GM12878 (cell line): ENCODE measurements at regions of chr1 and their contacts with region 1.

Region 1: DNA sequence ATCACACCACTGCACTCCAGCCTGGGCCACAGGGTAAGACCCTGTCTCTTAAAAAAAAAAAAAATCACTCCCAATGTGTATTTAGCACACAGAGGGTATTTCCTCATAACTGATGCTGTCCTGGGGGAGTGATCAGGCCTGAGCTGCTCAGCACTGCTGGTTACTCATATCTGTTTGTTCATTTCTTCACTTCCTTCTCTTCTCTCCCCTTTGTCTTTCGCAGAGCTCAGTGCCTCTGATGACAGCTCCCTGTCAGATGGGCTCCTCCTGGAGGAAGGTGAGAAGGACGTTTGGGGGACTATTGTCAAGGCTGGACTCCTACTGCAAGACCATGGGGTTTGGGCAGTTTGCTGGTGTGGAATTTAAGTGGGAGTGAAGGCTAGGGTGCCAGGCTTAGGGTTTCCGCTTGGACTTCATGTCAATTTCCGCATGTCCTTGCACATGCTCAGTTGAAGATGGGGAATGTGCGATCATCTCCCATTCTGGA is 13.0 kb downstream of the INAVA start:
- DNase-seq: peak; percentile 67
- ATAC-seq: peak; percentile 74
- H3K4me3 ChIP-seq: no peak overlapping the region
- H3K27ac ChIP-seq: no peak overlapping the region
- H3K4me1 ChIP-seq: peaks cover 15% of the 10 kb centered on the region
- H3K27me3 ChIP-seq: no peaks in the 10 kb centered on the region
- CTCF ChIP-seq: peak in 1 of 3 experiments; percentile 26; a peak in 1 of 6 replicates
- EP300 ChIP-seq: peak; percentile 44 to 60; a peak in 2 of 4 replicates
- POLR2A ChIP-seq: no peak
- RAD21 ChIP-seq: peak; percentile 46

Region 2: GRCh38 chr1:200588698-200589097 is 319.0 kb before region 1 on chr1:
- CTCF ChIA-PET with region 1: no interaction called
- POLR2A ChIA-PET with region 1: interaction called, 12 read pairs
- RAD21 ChIA-PET with region 1: no interaction called
- SMC1A ChIA-PET with region 1: no interaction called
- in situ Hi-C with region 1: no loop called
- intact Hi-C with region 1: no loop called
- DNase-seq: no peak
- ATAC-seq: peak; percentile 52
- H3K4me3 ChIP-seq: no peak overlapping the region
- H3K27ac ChIP-seq: no peak overlapping the region
- H3K4me1 ChIP-seq: no peaks in the 10 kb centered on the region
- H3K27me3 ChIP-seq: no peaks in the 10 kb centered on the region
- CTCF ChIP-seq: no peak
- EP300 ChIP-seq: no peak
- POLR2A ChIP-seq: no peak
- RAD21 ChIP-seq: no peak

Region 3: GRCh38 chr1:200866521-200866920 is 41.1 kb before region 1 on chr1:
- CTCF ChIA-PET with region 1: interaction called, 6 read pairs
- POLR2A ChIA-PET with region 1: interaction called, 14 read pairs
- RAD21 ChIA-PET with region 1: interaction called, 19 read pairs
- SMC1A ChIA-PET with region 1: interaction called, 41 read pairs
- in situ Hi-C with region 1: no loop called
- intact Hi-C with region 1: loop called (anchors 5 kb)
- DNase-seq: peak; percentile 98
- ATAC-seq: peak; percentile 74
- H3K4me3 ChIP-seq: no peak overlapping the region
- H3K27ac ChIP-seq: peak overlapping the region; percentile 71
- H3K4me1 ChIP-seq: peaks cover 71% of the 10 kb centered on the region
- H3K27me3 ChIP-seq: no peaks in the 10 kb centered on the region
- CTCF ChIP-seq: no peak
- EP300 ChIP-seq: peak; percentile 96 to 97
- POLR2A ChIP-seq: no peak
- RAD21 ChIP-seq: peak; percentile 22; the same call in 1 of the 2 replicates

Region 4: GRCh38 chr1:200877839-200878551 is 29.7 kb before region 1 on chr1:
- CTCF ChIA-PET with region 1: interaction called, 14 read pairs
- POLR2A ChIA-PET with region 1: interaction called, 6 read pairs
- RAD21 ChIA-PET with region 1: interaction called, 18 read pairs
- SMC1A ChIA-PET with region 1: interaction called, 7 read pairs
- in situ Hi-C with region 1: no loop called
- intact Hi-C with region 1: no loop called
- DNase-seq: peak; percentile 89
- ATAC-seq: peak; percentile 84
- H3K4me3 ChIP-seq: no peak overlapping the region
- H3K27ac ChIP-seq: no peak overlapping the region
- H3K4me1 ChIP-seq: peaks cover 17% of the 10 kb centered on the region
- H3K27me3 ChIP-seq: no peaks in the 10 kb centered on the region
- CTCF ChIP-seq: no peak
- EP300 ChIP-seq: peak in 1 of 2 experiments; percentile 58; a peak in 1 of 4 replicates
- POLR2A ChIP-seq: no peak
- RAD21 ChIP-seq: no peak

Region 5: GRCh38 chr1:200890818-200891773 is 16.6 kb before region 1 on chr1:
- CTCF ChIA-PET with region 1: interaction called, 131 read pairs
- POLR2A ChIA-PET with region 1: interaction called, 60 read pairs
- RAD21 ChIA-PET with region 1: interaction called, 53 read pairs
- SMC1A ChIA-PET with region 1: interaction called, 193 read pairs
- in situ Hi-C with region 1: no loop called
- intact Hi-C with region 1: loop called (anchors 2 kb)
- DNase-seq: no peak
- ATAC-seq: peak; percentile 5
- H3K4me3 ChIP-seq: peak overlapping the region; percentile 45
- H3K27ac ChIP-seq: peak overlapping the region; percentile 69; the same call in 1 of the 2 replicates
- H3K4me1 ChIP-seq: peaks cover 61% of the 10 kb centered on the region
- H3K27me3 ChIP-seq: no peaks in the 10 kb centered on the region
- CTCF ChIP-seq: peak; percentile 42 to 58 (median 47)
- EP300 ChIP-seq: no peak
- POLR2A ChIP-seq: peak; percentile 53; the same call in 1 of the 2 replicates
- RAD21 ChIP-seq: peak; percentile 26; the same call in 1 of the 2 replicates

Region 6: DNA sequence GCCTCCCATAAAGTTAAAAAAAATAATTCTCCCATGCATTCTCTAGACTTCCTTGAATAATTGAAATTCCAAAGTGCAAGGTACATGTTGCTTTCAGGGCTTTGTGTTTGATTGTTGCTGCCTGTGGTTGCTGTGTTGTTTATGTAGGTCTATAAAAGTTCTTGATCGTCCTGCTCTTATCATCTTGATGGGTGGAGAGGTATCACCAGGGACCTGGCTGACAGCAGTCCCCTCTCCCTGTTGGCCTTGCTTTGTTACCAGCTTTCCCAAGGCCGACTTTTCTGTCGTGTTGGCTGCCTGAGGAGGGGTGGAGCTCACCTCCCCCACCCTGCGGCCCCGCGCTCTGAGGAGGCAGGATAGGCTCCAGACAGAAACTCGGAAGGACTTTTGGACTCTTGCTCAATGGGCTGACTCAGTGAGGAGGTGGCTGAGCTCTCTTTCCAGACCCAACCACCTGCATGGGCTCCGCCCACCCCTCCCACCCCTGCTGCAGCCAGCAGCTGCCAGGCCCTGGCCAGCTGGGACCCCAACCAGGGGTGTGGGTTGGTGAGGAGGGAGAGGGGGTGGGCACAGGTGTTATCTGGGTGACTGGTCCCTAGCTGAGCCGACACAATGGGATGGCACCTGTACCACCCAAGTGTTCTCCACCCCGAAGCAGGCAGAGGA is 11.0 kb before region 1 on chr1:
- CTCF ChIA-PET with region 1: interaction called, 131 read pairs
- POLR2A ChIA-PET with region 1: interaction called, 60 read pairs
- RAD21 ChIA-PET with region 1: interaction called, 23 read pairs
- SMC1A ChIA-PET with region 1: interaction called, 193 read pairs
- in situ Hi-C with region 1: no loop called
- intact Hi-C with region 1: no loop called
- DNase-seq: no peak
- ATAC-seq: no peak
- H3K4me3 ChIP-seq: no peak overlapping the region
- H3K27ac ChIP-seq: no peak overlapping the region
- H3K4me1 ChIP-seq: peaks cover 19% of the 10 kb centered on the region
- H3K27me3 ChIP-seq: no peaks in the 10 kb centered on the region
- CTCF ChIP-seq: no peak
- EP300 ChIP-seq: no peak
- POLR2A ChIP-seq: no peak
- RAD21 ChIP-seq: no peak

Region 7: DNA sequence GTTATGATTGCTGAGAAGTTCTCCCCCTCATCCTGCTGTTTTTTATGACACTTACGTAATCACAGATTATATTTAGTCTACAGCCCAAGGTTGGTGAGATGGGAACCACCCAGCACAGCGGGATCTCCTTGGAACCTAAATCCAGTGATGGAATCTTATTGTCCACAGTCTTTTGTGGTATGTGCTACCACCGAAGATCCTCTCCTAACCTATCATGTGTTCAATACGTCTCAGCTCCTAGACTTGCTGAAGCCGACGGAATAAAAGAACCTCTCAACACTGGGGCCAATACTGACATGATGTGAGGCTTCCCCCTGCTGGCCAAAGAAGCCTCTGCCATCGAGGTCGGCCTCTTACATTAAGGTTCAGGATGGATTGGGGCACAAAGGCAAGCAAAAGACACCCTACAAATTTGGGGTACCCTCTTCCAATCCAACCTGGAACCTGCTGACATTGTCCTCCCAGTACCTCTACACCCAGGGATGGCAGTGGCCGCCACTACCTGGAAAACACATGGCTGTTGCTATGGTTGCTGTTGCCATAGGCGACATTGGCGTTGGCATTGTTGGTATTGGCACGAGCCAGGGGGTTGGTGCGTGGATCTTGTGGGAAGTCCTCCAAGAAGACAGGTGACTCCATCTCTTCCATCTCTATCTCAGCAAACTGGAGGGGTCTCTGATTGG is 135.3 kb after region 1 on chr1:
- CTCF ChIA-PET with region 1: interaction called, 3 read pairs
- POLR2A ChIA-PET with region 1: no interaction called
- RAD21 ChIA-PET with region 1: no interaction called
- SMC1A ChIA-PET with region 1: interaction called, 3 read pairs
- in situ Hi-C with region 1: loop called (anchors 5 kb)
- intact Hi-C with region 1: no loop called
- DNase-seq: no peak
- ATAC-seq: peak; percentile 97
- H3K4me3 ChIP-seq: no peak overlapping the region
- H3K27ac ChIP-seq: no peak overlapping the region
- H3K4me1 ChIP-seq: no peaks in the 10 kb centered on the region
- H3K27me3 ChIP-seq: no peaks in the 10 kb centered on the region; a peak in 1 of 4 replicates
- CTCF ChIP-seq: peak; percentile 87 to 94 (median 93); a peak in 5 of 6 replicates
- EP300 ChIP-seq: no peak
- POLR2A ChIP-seq: no peak
- RAD21 ChIP-seq: peak; percentile 99